Heart left ventricle (tissue), 16 donors: ENCODE measurements at regions of chr19 and their contacts with region 1.

Region 1: GRCh38 chr19:39125554-39126311 is at the start of gene PAK4:
- DNase-seq: peak; percentile 98
- ATAC-seq: peak; percentile 99 to 100 (median 100)
- H3K4me3 ChIP-seq: peak within 1 kb of the TSS; percentile 55 to 88 (median 78)
- H3K27ac ChIP-seq: peak within 1 kb of the TSS; percentile 41 to 86 (median 78)
- H3K4me1 ChIP-seq: peaks cover 0 to 59% (median 35%) of the 10 kb centered on the region in 12 donors
- H3K27me3 ChIP-seq: peaks cover 0 to 11% (median 0%) of the 10 kb centered on the region in 9 donors
- CTCF ChIP-seq: no peak
- POLR2A ChIP-seq: peak in 1 of 2 donors; percentile 61
- total RNA-seq, gene PAK4: 11.5 to 22.1 (median 16.2) TPM

Region 2: GRCh38 chr19:38849860-38850435 is 275.8 kb before region 1 on chr19 and contains the start of gene HNRNPL:
- intact Hi-C with region 1: loop called in 1 of 10 experiments (anchors 5 kb)
- DNase-seq: peak; percentile 99 to 100 (median 100)
- ATAC-seq: peak; percentile 79 to 85 (median 81)
- H3K4me3 ChIP-seq: peak within 1 kb of the TSS; percentile 83 to 100 (median 95)
- H3K27ac ChIP-seq: peak within 1 kb of the TSS; percentile 99 to 100 (median 100)
- H3K4me1 ChIP-seq: peaks cover 9 to 59% (median 46%) of the 10 kb centered on the region in 12 donors
- H3K27me3 ChIP-seq: no peaks in the 10 kb centered on the region
- CTCF ChIP-seq: peak; percentile 21 to 81 (median 56)
- POLR2A ChIP-seq: peak; percentile 40 to 90
- total RNA-seq, gene HNRNPL: 93.6 to 256 (median 165) TPM

Region 3: GRCh38 chr19:38917516-38918491 is 207.9 kb before region 1 on chr19:
- intact Hi-C with region 1: no loop called
- DNase-seq: peak in 1 of 5 donors; percentile 23
- ATAC-seq: peak in 2 of 4 donors; percentile 11 to 36
- H3K4me3 ChIP-seq: no peak overlapping the region
- H3K27ac ChIP-seq: no peak overlapping the region
- H3K4me1 ChIP-seq: no peaks in the 10 kb centered on the region
- H3K27me3 ChIP-seq: no peaks in the 10 kb centered on the region
- CTCF ChIP-seq: peak in 2 of 12 donors; percentile 4 to 11
- POLR2A ChIP-seq: no peak

Region 4: DNA sequence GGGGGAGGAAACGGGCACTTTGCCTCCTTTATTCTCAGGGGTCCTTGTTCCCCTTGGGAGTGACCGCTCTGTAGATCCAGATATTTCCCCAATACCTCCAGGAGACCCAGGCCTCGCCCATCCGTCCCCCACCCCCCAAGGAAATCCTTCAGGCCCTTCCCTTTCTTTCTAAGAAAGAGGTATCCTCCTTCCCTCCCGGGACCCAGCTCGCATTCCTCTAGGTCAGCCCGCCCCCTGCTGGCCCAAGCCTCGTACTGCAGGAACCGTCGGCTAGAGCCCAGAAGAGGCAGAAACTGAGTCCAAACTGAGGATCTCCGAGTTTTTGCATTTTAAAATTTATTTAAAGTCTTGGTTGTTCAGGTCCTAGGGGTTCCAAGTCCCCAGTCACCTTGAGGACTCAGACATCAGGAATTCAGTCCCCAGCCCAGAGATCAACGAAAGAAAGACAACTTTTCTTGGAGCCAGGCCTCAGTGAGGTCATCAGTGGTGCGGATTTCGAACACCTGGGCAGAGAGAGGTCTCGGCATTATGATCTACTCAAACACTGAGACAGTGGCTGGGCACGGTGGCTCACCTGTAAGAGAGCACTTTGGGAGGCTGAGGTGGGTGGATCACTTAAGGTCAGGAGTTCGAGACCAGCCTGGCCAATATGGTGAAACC is 202.4 kb after region 1 on chr19:
- intact Hi-C with region 1: loop called in 9 of 10 experiments (anchors 1 to 5 kb)
- DNase-seq: peak; percentile 74 to 91 (median 82)
- ATAC-seq: peak; percentile 28 to 87 (median 78)
- H3K4me3 ChIP-seq: no peak overlapping the region
- H3K27ac ChIP-seq: no peak overlapping the region
- H3K4me1 ChIP-seq: peaks cover 0 to 11% (median 2%) of the 10 kb centered on the region in 12 donors
- H3K27me3 ChIP-seq: no peaks in the 10 kb centered on the region
- CTCF ChIP-seq: peak; percentile 91 to 97 (median 96)
- POLR2A ChIP-seq: no peak

Region 5: DNA sequence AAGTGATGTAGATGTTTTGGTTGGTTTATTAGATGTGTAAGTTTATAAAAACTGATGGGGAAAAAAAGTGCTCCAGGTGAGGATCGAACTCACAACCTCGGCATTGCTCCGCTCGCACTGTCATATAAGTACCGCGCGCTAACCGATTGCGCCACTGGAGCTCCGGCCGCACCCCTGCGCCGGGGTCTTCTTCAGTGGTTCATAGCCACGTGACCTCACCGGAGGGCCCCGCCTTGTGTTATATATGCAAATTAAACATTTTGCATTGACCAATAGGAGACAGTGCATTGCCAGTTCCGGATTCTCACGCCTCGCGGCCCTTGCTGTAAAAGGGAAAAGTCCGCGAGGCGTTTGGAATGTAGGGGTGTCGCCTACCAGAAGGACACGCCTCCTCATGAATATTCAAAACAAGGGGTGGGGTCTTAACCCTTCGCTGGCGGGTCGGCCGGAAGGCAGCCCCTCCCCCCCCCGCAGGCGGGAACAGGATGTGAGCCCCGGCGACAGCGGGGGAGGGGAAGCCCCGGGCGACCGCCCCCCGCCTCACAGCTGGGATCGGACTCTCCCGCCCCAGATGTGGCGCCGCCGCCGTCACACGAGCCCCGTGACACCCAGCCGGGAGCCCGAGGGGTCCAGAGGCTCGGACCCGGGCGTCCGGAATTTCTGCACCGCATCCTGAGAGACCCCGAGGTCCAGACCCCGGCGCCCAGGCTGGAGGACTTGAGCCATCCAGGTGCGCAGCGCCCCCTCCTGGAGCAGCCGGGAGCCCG is 286.6 kb after region 1 on chr19 and contains the start of gene PLEKHG2:
- intact Hi-C with region 1: loop called in 3 of 10 experiments (anchors 5 to 10 kb)
- DNase-seq: peak; percentile 97 to 98 (median 97)
- ATAC-seq: peak; percentile 65 to 72 (median 71)
- H3K4me3 ChIP-seq: peak within 1 kb of the TSS; percentile 61 to 100 (median 85)
- H3K27ac ChIP-seq: peak within 1 kb of the TSS; percentile 94 to 100 (median 99)
- H3K4me1 ChIP-seq: peaks cover 7 to 65% (median 37%) of the 10 kb centered on the region in 12 donors
- H3K27me3 ChIP-seq: peaks cover 0 to 5% (median 0%) of the 10 kb centered on the region in 9 donors
- CTCF ChIP-seq: peak; percentile 75 to 98 (median 89)
- POLR2A ChIP-seq: peak in 1 of 2 donors; percentile 80
- total RNA-seq, gene PLEKHG2: 9.2 to 38.5 (median 14.6) TPM

Region 6: GRCh38 chr19:39539519-39540332 is 414.0 kb after region 1 on chr19 and contains the start of gene EID2:
- intact Hi-C with region 1: loop called in 5 of 10 experiments (anchors 5 to 10 kb)
- DNase-seq: peak; percentile 95 to 98 (median 97)
- ATAC-seq: peak; percentile 94 to 99 (median 98)
- H3K4me3 ChIP-seq: peak within 1 kb of the TSS; percentile 56 to 98 (median 81)
- H3K27ac ChIP-seq: peak within 1 kb of the TSS; percentile 85 to 98 (median 94)
- H3K4me1 ChIP-seq: peaks cover 0 to 24% (median 18%) of the 10 kb centered on the region in 12 donors
- H3K27me3 ChIP-seq: no peaks in the 10 kb centered on the region
- CTCF ChIP-seq: peak; percentile 78 to 97 (median 85)
- POLR2A ChIP-seq: peak in 1 of 2 donors; percentile 92
- total RNA-seq, gene EID2: 7.1 to 14.6 (median 12.6) TPM